ENCODE measurements at regions of chr10 and their contacts with region 1.

Region 1: GRCh38 chr10:73940634-73941221 is 29.8 kb downstream of the PLAU start:
- DNase-seq: peak; percentile 84
- H3K4me3 Mint-ChIP-seq: peak overlapping the region; percentile 9
- H3K27ac Mint-ChIP-seq: peak overlapping the region; percentile 71
- H3K4me1 Mint-ChIP-seq: peaks cover 24% of the 10 kb centered on the region
- H3K27me3 Mint-ChIP-seq: peaks cover 15% of the 10 kb centered on the region

Region 2: DNA sequence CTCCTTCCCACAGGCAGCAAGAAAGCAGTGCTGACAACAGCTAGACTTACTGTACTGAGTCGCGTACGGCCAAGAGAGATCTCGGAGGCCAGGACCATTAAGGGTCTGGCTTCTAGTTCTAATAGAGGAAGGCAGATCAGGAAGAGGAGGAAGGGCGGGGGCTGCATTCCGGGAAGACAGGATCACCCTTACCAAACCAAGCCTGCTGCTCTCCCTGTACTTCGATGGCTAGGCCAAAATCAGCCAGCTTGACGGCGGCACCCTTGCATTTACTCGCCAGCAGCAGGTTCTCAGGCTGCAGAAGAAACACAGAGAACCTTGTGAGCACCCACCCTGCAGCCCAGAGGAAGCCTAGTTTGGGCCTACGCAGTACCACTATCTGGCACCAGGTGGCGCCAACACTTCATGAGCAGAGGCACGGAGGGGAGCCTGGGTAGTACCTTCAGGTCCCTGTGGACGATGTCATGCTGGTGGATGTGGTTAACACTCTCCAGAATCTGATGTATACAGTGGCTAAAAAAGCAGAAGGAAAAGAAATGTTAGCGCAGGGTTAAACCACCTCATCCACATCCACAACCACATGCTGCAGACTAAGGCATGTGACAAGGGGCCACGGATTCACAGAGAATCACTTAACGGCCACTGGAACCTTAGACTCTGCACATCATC is 91.8 kb before region 1 on chr10:
- CTCF ChIA-PET with region 1: interaction called, 32 read pairs
- POLR2A ChIA-PET with region 1: no interaction called
- DNase-seq: peak; percentile 93
- H3K4me3 Mint-ChIP-seq: no peak overlapping the region
- H3K27ac Mint-ChIP-seq: peak overlapping the region; percentile 73
- H3K4me1 Mint-ChIP-seq: peaks cover 24% of the 10 kb centered on the region
- H3K27me3 Mint-ChIP-seq: no peaks in the 10 kb centered on the region

Region 3: GRCh38 chr10:73886085-73886529 is 54.6 kb before region 1 on chr10:
- CTCF ChIA-PET with region 1: interaction called, 161 read pairs
- POLR2A ChIA-PET with region 1: no interaction called
- DNase-seq: peak; percentile 79
- H3K4me3 Mint-ChIP-seq: no peak overlapping the region
- H3K27ac Mint-ChIP-seq: no peak overlapping the region
- H3K4me1 Mint-ChIP-seq: peaks cover 9% of the 10 kb centered on the region
- H3K27me3 Mint-ChIP-seq: no peaks in the 10 kb centered on the region

Region 4: DNA sequence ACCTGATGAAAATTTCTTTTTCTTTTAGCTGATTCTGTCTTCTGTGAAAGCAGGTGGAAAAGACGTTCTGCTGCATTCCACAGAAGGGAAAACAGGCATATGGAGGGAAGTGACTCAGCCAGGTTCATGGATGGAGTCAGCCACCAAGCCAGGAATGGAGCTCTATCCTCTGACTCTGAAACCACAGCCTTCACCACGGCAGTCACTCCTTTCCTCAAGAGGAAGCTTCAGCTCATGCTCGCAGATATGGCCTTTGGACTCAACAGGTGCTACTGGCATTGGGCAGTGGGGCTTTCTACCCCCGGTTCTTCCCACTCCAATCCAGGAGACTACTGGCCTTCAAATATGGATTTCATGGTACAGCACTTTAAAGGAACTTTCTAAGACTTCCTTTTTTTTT is 41.3 kb before region 1 on chr10:
- CTCF ChIA-PET with region 1: interaction called, 161 read pairs
- POLR2A ChIA-PET with region 1: no interaction called
- DNase-seq: no peak
- H3K4me3 Mint-ChIP-seq: no peak overlapping the region
- H3K27ac Mint-ChIP-seq: no peak overlapping the region
- H3K4me1 Mint-ChIP-seq: peaks cover 3% of the 10 kb centered on the region
- H3K27me3 Mint-ChIP-seq: peaks cover 19% of the 10 kb centered on the region

Region 5: GRCh38 chr10:73920089-73920488 is 20.6 kb before region 1 on chr10:
- CTCF ChIA-PET with region 1: interaction called, 18 read pairs
- POLR2A ChIA-PET with region 1: no interaction called
- DNase-seq: peak; percentile 12
- H3K4me3 Mint-ChIP-seq: no peak overlapping the region
- H3K27ac Mint-ChIP-seq: peak overlapping the region; percentile 76
- H3K4me1 Mint-ChIP-seq: peaks cover 31% of the 10 kb centered on the region
- H3K27me3 Mint-ChIP-seq: peaks cover 31% of the 10 kb centered on the region

Region 6: GRCh38 chr10:73956476-73957359 is 16.0 kb after region 1 on chr10:
- CTCF ChIA-PET with region 1: interaction called, 18 read pairs
- POLR2A ChIA-PET with region 1: no interaction called
- DNase-seq: peak; percentile 59
- H3K4me3 Mint-ChIP-seq: peak overlapping the region; percentile 65
- H3K27ac Mint-ChIP-seq: peak overlapping the region; percentile 95
- H3K4me1 Mint-ChIP-seq: peaks cover 59% of the 10 kb centered on the region
- H3K27me3 Mint-ChIP-seq: no peaks in the 10 kb centered on the region

Region 7: DNA sequence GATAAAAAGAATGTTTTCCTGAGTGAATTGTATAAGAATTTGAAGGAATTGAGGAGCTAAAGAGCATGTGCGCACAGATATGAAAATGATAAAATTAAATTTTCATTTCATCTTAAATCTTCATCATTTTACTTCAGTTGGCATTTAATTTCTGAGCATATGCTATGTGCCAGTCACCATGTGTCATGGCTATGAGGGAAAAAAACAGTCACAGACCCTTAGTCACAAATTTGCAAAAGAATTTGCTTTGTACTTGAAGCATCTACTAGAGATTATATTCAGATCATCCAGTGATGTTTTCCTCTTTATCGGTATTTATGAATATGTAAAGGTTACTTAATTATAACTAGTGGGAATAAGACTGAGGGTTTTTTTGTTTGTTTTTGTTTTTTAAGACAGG is 87.0 kb after region 1 on chr10:
- CTCF ChIA-PET with region 1: no interaction called
- POLR2A ChIA-PET with region 1: no interaction called
- DNase-seq: no peak
- H3K4me3 Mint-ChIP-seq: no peak overlapping the region
- H3K27ac Mint-ChIP-seq: no peak overlapping the region
- H3K4me1 Mint-ChIP-seq: peaks cover 26% of the 10 kb centered on the region
- H3K27me3 Mint-ChIP-seq: no peaks in the 10 kb centered on the region

Measured in activated CD4-positive, alpha-beta T cell treated with anti-CD3 and anti-CD28 coated beads, Interleukin-2, amount 10 ng/mL, durations not matched to agents 7 days and 5 days (primary cell).